ENCODE measurements at regions of chr1 and their contacts with region 1.

Region 1: DNA sequence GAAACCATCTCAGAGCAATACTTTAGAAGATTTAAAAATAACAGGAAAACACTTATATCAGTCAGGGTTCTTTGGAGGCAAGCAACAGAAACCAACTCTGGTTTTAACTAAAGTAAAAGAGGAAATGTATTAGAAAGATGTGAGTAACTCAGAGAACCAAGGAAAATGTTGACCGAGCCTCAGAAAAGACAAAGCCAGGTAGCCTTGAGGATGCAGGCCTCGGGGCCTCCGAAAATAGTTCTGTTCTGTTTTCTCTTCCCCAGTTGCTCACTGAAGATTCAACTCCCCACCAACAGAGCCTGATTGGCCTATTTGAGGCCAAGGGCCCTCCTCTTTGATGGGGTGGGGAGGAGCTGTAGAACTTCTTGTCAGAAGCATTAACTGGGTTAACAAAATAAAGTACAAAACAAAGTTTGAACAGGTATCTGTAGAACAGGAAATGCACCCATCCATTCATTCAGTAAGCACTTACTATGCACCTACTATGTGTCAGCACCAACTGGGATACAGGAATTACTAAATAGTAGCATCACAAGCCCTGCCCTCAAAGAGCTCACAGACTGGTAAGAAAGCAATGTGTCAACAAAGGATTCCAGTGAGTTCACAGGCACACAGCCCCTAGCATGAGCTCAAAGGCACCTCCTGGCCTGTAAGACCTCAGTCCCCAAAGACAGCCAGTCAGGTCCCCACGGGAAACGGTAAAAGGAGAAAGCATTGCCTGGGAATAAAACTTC is 12.6 kb downstream of the SLAMF8 start:
- DNase-seq: no peak
- ATAC-seq: no peak
- H3K4me3 Mint-ChIP-seq: no peak overlapping the region
- H3K27ac Mint-ChIP-seq: no peak overlapping the region
- H3K4me1 Mint-ChIP-seq: peaks cover 8% of the 10 kb centered on the region
- H3K27me3 Mint-ChIP-seq: peaks cover 12% of the 10 kb centered on the region

Region 2: DNA sequence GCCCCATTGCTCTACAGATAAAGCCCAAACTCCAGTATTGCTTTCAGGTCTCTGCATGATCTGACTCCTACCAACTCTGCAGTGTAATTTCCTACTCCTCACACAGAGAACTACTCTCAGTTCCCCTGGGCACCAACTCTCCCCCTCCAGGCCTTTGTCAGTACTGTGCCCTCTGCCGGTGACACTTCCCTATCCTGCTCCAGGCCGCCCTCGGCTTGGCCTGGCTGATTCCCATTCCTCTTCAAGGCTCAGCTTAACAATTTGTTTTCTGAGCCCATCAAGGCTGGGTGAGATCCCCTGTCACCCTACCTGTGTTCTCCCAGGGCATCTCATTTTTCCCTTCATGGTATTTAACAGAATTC is 10.0 kb before region 1 on chr1:
- CTCF ChIA-PET with region 1: interaction called, 10 read pairs
- POLR2A ChIA-PET with region 1: interaction called, 4 read pairs
- DNase-seq: no peak
- ATAC-seq: no peak
- H3K4me3 Mint-ChIP-seq: no peak overlapping the region
- H3K27ac Mint-ChIP-seq: no peak overlapping the region
- H3K4me1 Mint-ChIP-seq: peaks cover 50% of the 10 kb centered on the region
- H3K27me3 Mint-ChIP-seq: peaks cover 40% of the 10 kb centered on the region